ENCODE measurements at regions of chr20 and their contacts with region 1.

Region 1: DNA sequence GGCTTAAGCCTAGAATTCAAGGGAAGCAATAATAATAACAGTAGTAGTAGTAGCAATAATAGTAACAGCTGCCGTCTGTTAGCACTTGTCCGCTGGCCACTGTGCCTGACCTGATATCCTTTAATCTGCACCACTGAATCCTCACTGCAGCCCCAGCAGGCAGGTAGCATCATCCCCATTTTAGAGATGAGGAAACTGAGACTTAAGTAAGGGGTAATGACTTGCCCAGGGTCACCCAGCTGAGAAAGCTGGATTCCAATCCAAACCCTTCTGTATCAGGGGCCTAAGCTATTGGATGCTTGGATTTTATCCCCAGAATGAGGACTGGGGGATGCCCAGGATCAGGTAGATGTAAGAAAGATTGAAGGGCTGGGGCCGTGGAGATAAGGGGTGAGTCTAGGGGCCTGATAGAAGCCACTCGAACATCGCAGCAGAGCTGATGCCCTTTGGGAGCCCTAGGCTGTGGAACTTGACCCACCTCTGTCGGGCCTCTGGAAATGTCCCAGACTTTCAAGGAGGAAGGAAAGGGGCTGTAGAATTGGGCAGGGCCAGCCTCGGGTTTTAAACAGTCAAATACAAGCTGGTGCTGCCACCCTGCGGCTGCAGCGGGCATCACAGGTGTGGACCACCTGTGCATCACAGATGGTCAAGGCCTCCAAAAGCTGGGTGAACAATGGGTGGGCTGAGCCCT is 102.1 kb upstream of the MYL9 start:
- DNase-seq: peak; percentile 68 to 76
- ATAC-seq: peak; percentile 67 to 81
- H3K4me3 ChIP-seq: no peak overlapping the region
- H3K27ac ChIP-seq: no peak overlapping the region
- H3K4me1 ChIP-seq: no peaks in the 10 kb centered on the region
- CTCF ChIP-seq: peak; percentile 88
- EP300 ChIP-seq: no peak
- POLR2A ChIP-seq: no peak
- RAD21 ChIP-seq: peak; percentile 93 to 94

Region 2: GRCh38 chr20:35994994-35995453 is 444.2 kb before region 1 on chr20:
- CTCF ChIA-PET with region 1: interaction called, 11 read pairs
- POLR2A ChIA-PET with region 1: no interaction called
- DNase-seq: peak; percentile 87 to 91
- ATAC-seq: peak; percentile 94 to 97
- H3K4me3 ChIP-seq: no peak overlapping the region
- H3K27ac ChIP-seq: peak overlapping the region; percentile 39 to 55; a peak in 1 of 6 replicates
- H3K4me1 ChIP-seq: peaks cover 23% of the 10 kb centered on the region
- CTCF ChIP-seq: peak; percentile 93
- EP300 ChIP-seq: no peak
- POLR2A ChIP-seq: no peak
- RAD21 ChIP-seq: peak; percentile 96 to 97

Region 3: DNA sequence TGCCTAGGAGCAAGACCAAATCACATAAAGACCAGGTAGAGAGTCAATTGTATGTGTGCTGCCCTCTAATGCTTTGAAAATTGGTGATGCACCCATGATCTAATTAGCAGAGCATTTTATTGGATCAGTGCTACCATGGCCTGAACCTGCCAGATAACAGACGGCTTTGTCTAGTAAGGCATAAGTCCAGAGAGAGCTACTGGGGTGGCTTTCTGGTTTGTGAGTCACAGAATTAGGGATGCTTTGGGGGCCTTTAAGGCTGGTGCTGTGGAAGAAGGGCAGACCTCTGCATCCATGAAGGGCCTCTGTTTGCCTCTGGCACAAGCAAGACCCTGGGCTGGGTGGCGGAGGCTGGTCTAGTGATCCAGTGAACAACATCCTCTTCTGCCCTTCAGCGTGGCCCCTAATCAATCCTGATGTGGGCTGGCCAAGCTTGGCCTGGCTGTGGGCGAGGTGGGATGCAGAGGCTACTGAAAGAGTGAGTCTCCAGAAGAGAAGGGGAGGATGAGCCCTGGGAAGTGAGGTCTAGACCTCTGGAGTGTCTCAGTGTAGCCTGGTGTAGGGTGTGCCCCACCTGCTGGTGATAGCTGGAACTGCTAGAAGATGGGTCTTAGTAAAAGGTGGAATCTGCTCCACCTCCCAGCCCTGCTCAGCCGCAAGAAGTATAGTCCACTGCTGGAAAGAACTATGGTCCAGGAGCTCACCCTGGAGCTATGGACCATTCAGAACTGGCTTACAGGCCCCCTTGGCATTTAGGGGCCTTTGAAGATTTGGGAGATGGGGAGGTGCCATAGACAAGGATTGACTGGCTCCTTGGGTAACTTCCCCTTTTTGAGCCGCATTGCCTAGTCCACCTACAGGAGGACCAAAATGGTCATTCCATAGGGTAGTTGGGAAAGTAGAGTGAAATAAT is 239.6 kb before region 1 on chr20:
- CTCF ChIA-PET with region 1: interaction called, 142 read pairs
- POLR2A ChIA-PET with region 1: no interaction called
- DNase-seq: peak; percentile 80 to 91
- ATAC-seq: peak; percentile 89 to 94
- H3K4me3 ChIP-seq: no peak overlapping the region
- H3K27ac ChIP-seq: peak overlapping the region in 1 of 2 experiments; percentile 34; a peak in 1 of 6 replicates
- H3K4me1 ChIP-seq: no peaks in the 10 kb centered on the region
- CTCF ChIP-seq: peak; percentile 81
- EP300 ChIP-seq: no peak
- POLR2A ChIP-seq: no peak
- RAD21 ChIP-seq: peak; percentile 84 to 88

Region 4: GRCh38 chr20:36246391-36246790 is 192.8 kb before region 1 on chr20:
- CTCF ChIA-PET with region 1: interaction called, 11 read pairs
- POLR2A ChIA-PET with region 1: no interaction called
- DNase-seq: no peak
- ATAC-seq: no peak
- H3K4me3 ChIP-seq: no peak overlapping the region
- H3K27ac ChIP-seq: no peak overlapping the region
- H3K4me1 ChIP-seq: no peaks in the 10 kb centered on the region
- CTCF ChIP-seq: no peak
- EP300 ChIP-seq: no peak
- POLR2A ChIP-seq: no peak
- RAD21 ChIP-seq: no peak

Region 5: GRCh38 chr20:36273414-36274180 is 165.6 kb before region 1 on chr20:
- CTCF ChIA-PET with region 1: interaction called, 108 read pairs
- POLR2A ChIA-PET with region 1: no interaction called
- DNase-seq: peak; percentile 28 to 58
- ATAC-seq: peak; percentile 41 to 69; a peak in 4 of 6 replicates
- H3K4me3 ChIP-seq: no peak overlapping the region
- H3K27ac ChIP-seq: no peak overlapping the region
- H3K4me1 ChIP-seq: no peaks in the 10 kb centered on the region
- CTCF ChIP-seq: peak; percentile 56
- EP300 ChIP-seq: no peak
- POLR2A ChIP-seq: no peak
- RAD21 ChIP-seq: peak; percentile 54 to 64

Region 6: DNA sequence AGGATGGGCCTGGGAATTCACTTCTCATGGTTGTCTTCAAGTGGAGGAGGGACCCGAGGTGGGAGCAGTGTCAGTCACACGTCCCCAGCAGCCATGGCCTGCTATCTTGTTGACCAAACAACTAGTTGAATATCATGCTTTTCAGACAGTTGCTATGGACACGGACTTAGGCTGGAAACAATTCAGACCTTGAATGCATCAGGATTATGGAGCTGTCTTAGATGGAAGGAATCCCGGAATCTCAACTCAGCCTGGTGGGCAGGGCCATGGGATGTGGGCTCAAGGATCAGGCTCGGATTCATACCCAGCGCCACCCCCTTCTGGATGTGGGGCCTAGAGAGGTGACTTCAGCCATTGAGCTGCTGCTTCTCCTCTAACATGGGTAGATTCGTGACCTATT is 20.5 kb before region 1 on chr20:
- CTCF ChIA-PET with region 1: interaction called, 17 read pairs
- POLR2A ChIA-PET with region 1: no interaction called
- DNase-seq: no peak
- ATAC-seq: no peak
- H3K4me3 ChIP-seq: no peak overlapping the region
- H3K27ac ChIP-seq: no peak overlapping the region
- H3K4me1 ChIP-seq: no peaks in the 10 kb centered on the region
- CTCF ChIP-seq: no peak
- EP300 ChIP-seq: no peak
- POLR2A ChIP-seq: no peak
- RAD21 ChIP-seq: no peak

Measured in A549 (cell line).